Activated T-helper 1 cell treated with anti-CD3 and anti-CD28 coated beads, Interleukin-12 subunit alpha, Interleukin-12 subunit beta, Interleukin-2, Interleukin-4 antibody, amounts not matched to agents 30 ng/mL and 10 ng/mL and 1 ng/mL, durations not matched to agents 14 hours and 24 hours and 36 hours (primary cell): ENCODE measurements at regions of chr20 and their contacts with region 1.

Region 1: GRCh38 chr20:17014217-17014616 is 212.6 kb upstream of the PCSK2 start:
- DNase-seq: no peak
- H3K4me3 Mint-ChIP-seq: no peak overlapping the region
- H3K27ac Mint-ChIP-seq: no peak overlapping the region
- H3K4me1 Mint-ChIP-seq: no peaks in the 10 kb centered on the region
- H3K27me3 Mint-ChIP-seq: no peaks in the 10 kb centered on the region

Region 2: GRCh38 chr20:17077030-17077429 is 62.8 kb after region 1 on chr20:
- intact Hi-C with region 1: loop called (anchors 10 kb)
- DNase-seq: no peak
- H3K4me3 Mint-ChIP-seq: no peak overlapping the region
- H3K27ac Mint-ChIP-seq: no peak overlapping the region
- H3K4me1 Mint-ChIP-seq: no peaks in the 10 kb centered on the region
- H3K27me3 Mint-ChIP-seq: no peaks in the 10 kb centered on the region

Region 3: DNA sequence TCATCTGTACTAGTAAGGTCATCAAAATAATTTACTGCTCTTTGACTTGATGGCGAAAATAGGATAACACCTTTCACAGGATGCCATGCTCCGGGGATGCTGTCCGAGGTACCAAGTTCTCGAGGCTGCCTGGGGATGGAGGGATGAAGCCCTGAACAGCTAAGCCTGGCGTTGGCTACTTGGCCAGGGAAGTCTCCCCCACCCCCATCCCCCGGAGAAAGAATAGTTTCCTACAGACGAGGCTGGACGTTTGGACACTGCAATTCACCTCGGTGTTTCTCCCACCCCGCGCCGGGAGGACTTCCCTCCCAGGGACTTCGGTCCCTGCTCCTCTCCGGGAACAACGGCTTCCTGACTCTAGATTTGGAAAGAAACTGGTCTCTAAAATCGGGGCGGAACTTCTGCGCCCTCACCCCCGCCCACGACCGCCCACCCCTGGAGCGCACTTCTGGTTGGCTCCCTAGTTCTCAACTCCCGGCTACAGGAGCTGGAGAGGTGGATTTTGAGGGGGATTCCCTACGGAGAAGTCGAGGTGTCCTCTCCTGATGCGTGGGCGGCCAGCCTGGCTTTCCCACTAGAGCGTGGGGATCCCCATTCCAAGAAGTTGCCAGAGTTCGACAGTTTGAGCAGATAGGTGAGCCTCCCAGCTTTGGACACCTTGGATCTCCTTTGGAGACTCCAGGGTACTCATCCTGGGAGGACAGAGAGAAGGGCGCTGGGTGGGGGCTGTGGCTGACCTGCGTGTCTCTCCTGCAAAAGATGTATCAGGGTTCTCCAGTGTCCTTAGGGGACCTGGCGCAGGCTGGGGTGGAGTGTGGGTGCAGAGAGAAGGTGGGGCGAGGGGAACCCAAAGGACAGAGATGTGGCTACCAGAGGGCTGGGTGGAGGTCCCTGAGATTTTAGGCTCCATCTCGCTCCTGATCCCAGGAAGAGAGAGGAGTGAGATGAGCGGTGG is 213.7 kb after region 1 on chr20:
- intact Hi-C with region 1: no loop called
- DNase-seq: no peak
- H3K4me3 Mint-ChIP-seq: no peak overlapping the region
- H3K27ac Mint-ChIP-seq: no peak overlapping the region
- H3K4me1 Mint-ChIP-seq: no peaks in the 10 kb centered on the region
- H3K27me3 Mint-ChIP-seq: peaks cover 44% of the 10 kb centered on the region

Region 4: GRCh38 chr20:17248224-17248623 is 234.0 kb after region 1 on chr20:
- intact Hi-C with region 1: no loop called
- DNase-seq: no peak
- H3K4me3 Mint-ChIP-seq: no peak overlapping the region
- H3K27ac Mint-ChIP-seq: no peak overlapping the region
- H3K4me1 Mint-ChIP-seq: no peaks in the 10 kb centered on the region
- H3K27me3 Mint-ChIP-seq: no peaks in the 10 kb centered on the region